Posterior vena cava (tissue), 2 donors: ENCODE measurements at regions of chr9 and their contacts with region 1.

Region 1: DNA sequence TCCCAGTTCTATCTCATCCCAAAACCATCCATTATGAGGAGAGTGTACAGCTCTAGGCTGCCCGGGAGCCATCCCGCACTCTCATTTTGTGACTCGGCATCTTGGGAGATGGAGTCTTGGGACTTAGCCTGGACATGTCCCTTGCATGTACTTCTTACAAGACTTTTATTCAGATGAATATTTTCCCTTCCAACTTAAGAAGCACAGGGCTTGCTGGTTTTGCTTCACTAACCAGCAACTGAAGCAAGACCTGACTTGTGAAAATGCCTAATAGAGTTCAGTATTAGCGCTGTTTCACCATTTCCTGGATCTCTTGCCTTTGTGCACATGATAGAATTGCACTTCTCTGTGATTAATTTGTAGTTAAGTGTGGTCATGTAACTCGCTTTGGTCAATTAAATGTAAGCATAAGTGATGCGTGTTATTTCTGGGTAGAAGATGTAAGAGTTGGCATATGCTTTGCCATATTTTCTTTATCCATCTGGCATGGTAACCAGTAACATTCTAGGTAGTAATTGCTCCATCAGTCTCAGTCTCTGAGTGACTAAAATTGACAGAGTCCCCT is 55.8 kb downstream of the PDCD1LG2 start:
- DNase-seq: no peak

Region 2: DNA sequence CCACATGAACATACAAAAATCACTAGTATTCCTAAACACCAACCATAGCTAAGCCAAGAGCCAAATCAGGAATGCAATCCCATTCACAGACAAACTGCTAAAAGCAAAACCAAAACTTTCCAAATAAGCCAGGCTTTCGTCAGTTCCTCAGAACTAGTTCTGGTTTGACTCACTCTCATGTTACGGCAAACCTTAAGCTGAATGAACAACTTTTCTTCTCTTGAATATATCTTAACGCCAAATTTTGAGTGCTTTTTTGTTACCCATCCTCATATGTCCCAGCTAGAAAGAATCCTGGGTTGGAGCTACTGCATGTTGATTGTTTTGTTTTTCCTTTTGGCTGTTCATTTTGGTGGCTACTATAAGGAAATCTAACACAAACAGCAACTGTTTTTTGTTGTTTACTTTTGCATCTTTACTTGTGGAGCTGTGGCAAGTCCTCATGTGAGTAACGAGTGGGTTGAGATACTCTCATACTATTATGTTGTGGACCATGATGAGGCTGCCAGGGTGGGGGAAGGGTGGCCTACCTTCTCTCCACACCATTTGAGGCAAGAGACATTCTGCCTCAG is 55.7 kb before region 1 on chr9 and contains the start of gene PDCD1LG2:
- intact Hi-C with region 1: loop called in 1 of 2 experiments (anchors 10 kb)
- DNase-seq: no peak
- total RNA-seq, gene PDCD1LG2: 4.2 to 5.4 TPM

Region 3: DNA sequence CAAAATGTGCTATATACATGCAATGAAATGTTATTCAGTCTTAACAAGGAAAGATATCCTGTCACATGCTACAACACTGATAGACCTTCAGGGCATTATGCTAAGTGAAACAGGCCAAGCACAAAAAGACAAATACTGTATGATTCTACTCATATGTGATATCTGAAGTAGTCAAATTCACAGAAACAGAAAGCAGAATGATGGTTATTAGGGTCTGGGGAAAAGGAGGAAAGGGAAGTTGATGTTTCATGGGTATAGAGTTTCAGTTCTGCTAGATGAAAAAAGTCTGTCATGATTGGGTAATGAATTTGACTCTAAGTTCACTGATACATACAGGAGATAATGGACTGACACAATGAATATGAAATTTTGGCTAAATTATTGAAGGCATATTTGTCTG is 51.6 kb after region 1 on chr9:
- intact Hi-C with region 1: no loop called
- DNase-seq: no peak

Region 4: GRCh38 chr9:6655036-6655435 is 1088.9 kb after region 1 on chr9:
- intact Hi-C with region 1: loop called in 1 of 2 experiments (anchors 10 kb)
- DNase-seq: no peak